Activated CD4-positive, alpha-beta T cell treated with anti-CD3 and anti-CD28 coated beads for 36 hours (primary cell): ENCODE measurements at regions of chr13 and their contacts with region 1.

Region 1: GRCh38 chr13:113490496-113491417 is at the start of gene DCUN1D2:
- DNase-seq: peak; percentile 83
- ATAC-seq: peak; percentile 72
- H3K4me3 Mint-ChIP-seq: peak within 1 kb of the TSS; percentile 85
- H3K27ac Mint-ChIP-seq: peak within 1 kb of the TSS; percentile 86
- H3K4me1 Mint-ChIP-seq: peaks cover 64% of the 10 kb centered on the region
- H3K27me3 Mint-ChIP-seq: no peaks in the 10 kb centered on the region
- total RNA-seq, gene DCUN1D2: 12.1 to 15.3 TPM

Region 2: DNA sequence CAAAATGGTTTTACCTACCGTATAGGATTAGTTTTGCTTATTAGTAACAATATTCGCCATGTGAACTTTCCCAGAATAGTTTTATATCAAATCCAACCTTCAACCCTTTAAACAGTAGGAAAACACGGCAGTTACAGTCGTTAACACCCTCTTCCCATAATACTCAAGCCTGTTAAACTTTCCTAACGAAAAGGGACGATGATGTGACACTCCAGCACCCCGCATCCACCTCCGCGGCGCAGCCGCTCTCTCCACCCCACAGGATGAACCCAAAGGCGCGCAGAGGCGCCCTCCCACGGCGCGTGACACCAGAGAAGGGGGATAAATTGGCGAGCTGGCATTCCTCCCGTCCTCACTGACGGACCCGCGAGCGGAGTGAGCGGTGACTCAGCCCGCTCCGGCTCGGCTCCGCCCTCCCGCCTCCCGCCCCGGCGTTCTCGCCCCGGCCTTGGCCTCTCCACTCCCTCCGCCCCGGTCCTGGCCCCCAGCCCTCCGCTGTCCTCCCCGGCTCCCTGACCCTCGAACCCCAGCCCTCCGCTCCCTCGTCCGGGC is 903.5 kb before region 1 on chr13:
- CTCF ChIA-PET with region 1: no interaction called
- POLR2A ChIA-PET with region 1: no interaction called
- intact Hi-C with region 1: loop called in 1 of 2 experiments (anchors 10 kb)
- DNase-seq: peak; percentile 84
- ATAC-seq: peak; percentile 79
- H3K4me3 Mint-ChIP-seq: peak overlapping the region; percentile 96
- H3K27ac Mint-ChIP-seq: peak overlapping the region; percentile 97
- H3K4me1 Mint-ChIP-seq: peaks cover 46% of the 10 kb centered on the region
- H3K27me3 Mint-ChIP-seq: no peaks in the 10 kb centered on the region

Region 3: GRCh38 chr13:113393563-113394338 is 97.0 kb before region 1 on chr13:
- CTCF ChIA-PET with region 1: no interaction called
- POLR2A ChIA-PET with region 1: no interaction called
- intact Hi-C with region 1: loop called in 1 of 2 experiments (anchors 1 kb)
- DNase-seq: peak; percentile 92
- ATAC-seq: peak; percentile 94
- H3K4me3 Mint-ChIP-seq: peak overlapping the region; percentile 91
- H3K27ac Mint-ChIP-seq: peak overlapping the region; percentile 85
- H3K4me1 Mint-ChIP-seq: peaks cover 4% of the 10 kb centered on the region
- H3K27me3 Mint-ChIP-seq: no peaks in the 10 kb centered on the region

Region 4: GRCh38 chr13:113545455-113545930 is 54.7 kb after region 1 on chr13:
- CTCF ChIA-PET with region 1: no interaction called
- POLR2A ChIA-PET with region 1: no interaction called
- intact Hi-C with region 1: no loop called
- DNase-seq: no peak
- ATAC-seq: no peak
- H3K4me3 Mint-ChIP-seq: no peak overlapping the region
- H3K27ac Mint-ChIP-seq: no peak overlapping the region
- H3K4me1 Mint-ChIP-seq: peaks cover 2% of the 10 kb centered on the region
- H3K27me3 Mint-ChIP-seq: no peaks in the 10 kb centered on the region

Region 5: DNA sequence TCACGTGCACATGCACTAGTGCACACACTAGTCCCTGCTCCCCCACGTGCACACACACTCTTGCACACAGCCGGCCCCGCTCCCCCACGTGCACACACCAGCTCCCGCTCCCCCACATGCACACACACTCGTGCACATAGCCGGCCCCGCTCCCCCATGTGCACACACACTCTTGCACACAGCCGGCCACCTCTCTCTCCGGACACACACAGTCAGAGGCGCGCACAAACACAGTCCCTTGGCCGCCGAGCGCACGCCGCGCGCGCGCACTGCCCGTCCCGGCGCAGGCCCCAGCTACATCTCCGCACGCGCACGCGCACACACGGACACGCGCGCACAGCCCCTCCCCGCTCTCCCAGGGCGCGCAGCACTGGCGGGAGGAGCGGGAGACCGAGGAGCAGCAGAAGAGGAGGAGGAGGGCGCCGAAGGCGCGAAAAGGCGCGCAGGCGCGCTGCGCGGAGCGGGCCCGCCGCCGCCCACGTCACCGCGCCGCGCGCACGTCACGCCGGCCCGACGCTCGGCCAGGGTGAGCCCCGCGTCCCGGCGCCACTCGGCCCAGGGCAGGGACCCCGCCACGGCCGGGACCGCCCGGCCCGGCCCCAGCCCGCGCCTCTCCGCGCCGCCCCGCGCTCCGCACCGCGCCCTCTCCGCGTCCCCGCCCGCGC is 93.6 kb after region 1 on chr13 and contains the start of gene TFDP1:
- CTCF ChIA-PET with region 1: no interaction called
- POLR2A ChIA-PET with region 1: no interaction called
- intact Hi-C with region 1: loop called (anchors 1 to 5 kb)
- DNase-seq: peak; percentile 93
- ATAC-seq: peak; percentile 92
- H3K4me3 Mint-ChIP-seq: peak within 1 kb of the TSS; percentile 90
- H3K27ac Mint-ChIP-seq: peak within 1 kb of the TSS; percentile 80
- H3K4me1 Mint-ChIP-seq: peaks cover 36% of the 10 kb centered on the region
- H3K27me3 Mint-ChIP-seq: no peaks in the 10 kb centered on the region
- total RNA-seq, gene TFDP1: 159 to 175 TPM

Region 6: DNA sequence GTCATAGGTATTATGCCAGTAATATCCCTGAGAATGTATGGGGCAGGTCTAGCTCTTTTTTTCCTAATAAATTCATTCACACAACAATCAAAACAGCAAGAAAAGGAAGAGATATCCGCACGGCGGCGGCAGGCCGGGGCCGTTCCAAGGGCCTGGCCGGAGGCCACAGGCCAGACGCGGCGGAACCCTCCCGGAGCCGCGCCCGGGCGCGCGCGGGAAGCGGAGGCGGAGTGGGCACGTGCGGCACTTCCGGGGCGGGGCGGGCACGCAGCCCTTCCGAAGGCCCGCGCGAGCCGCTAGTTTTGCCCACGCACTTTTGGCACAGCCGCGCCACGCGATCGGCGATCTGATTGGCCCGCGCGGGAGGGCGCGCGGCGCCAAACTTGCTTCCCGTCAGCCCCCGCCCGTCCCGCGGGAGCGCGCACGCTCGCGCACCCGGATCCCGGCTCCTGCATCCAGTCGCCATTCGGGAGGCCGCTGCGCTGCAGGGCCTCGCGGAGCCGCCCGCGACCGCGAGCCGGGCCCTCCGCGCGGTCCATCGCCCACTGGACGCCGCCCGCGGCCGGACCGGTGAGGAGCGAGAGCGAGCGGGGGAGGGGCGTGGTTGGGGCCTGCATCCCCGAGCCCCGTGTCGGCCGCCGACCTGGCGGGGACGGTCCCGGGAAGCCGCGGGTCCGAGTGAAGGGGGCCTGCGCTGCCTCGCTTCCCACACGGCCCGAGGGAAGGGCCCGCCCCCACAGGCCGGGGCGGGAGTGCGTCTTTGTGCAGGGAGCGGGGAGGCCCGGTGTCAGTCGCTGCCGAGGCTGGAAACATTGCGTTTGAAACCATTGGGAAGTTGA is 823.5 kb after region 1 on chr13 and contains the start of gene CHAMP1:
- CTCF ChIA-PET with region 1: no interaction called
- POLR2A ChIA-PET with region 1: no interaction called
- intact Hi-C with region 1: loop called in 1 of 2 experiments (anchors 1 kb)
- DNase-seq: peak; percentile 97
- ATAC-seq: peak; percentile 77
- H3K4me3 Mint-ChIP-seq: peak within 1 kb of the TSS; percentile 97
- H3K27ac Mint-ChIP-seq: peak within 1 kb of the TSS; percentile 98
- H3K4me1 Mint-ChIP-seq: peaks cover 43% of the 10 kb centered on the region
- H3K27me3 Mint-ChIP-seq: no peaks in the 10 kb centered on the region
- total RNA-seq, gene CHAMP1: 39.4 to 54.3 TPM